ENCODE measurements at regions of chr18 and their contacts with region 1.

Region 1: GRCh38 chr18:56062931-56063330 is 474.9 kb upstream of the TCF4 start:
- DNase-seq: no peak
- ATAC-seq: no peak
- H3K4me3 ChIP-seq: no peak overlapping the region
- H3K27ac ChIP-seq: no peak overlapping the region
- H3K4me1 ChIP-seq: peaks cover 0 to 23% (median 8%) of the 10 kb centered on the region in 9 donors
- H3K27me3 ChIP-seq: no peaks in the 10 kb centered on the region
- CTCF ChIP-seq: no peak

Region 2: GRCh38 chr18:56019908-56020307 is 43.0 kb before region 1 on chr18:
- intact Hi-C with region 1: loop called in 1 of 10 experiments (anchors 5 kb)
- DNase-seq: no peak
- ATAC-seq: no peak
- H3K4me3 ChIP-seq: no peak overlapping the region
- H3K27ac ChIP-seq: peak overlapping the region in 1 of 10 donors; percentile 34
- H3K4me1 ChIP-seq: peaks cover 0 to 17% (median 4%) of the 10 kb centered on the region in 9 donors
- H3K27me3 ChIP-seq: no peaks in the 10 kb centered on the region
- CTCF ChIP-seq: no peak

Measured in heart right ventricle (tissue), 16 donors.